ENCODE measurements at regions of chr22 and their contacts with region 1.

Region 1: GRCh38 chr22:39559454-39560105 is 11.0 kb upstream of the CACNA1I start:
- DNase-seq: peak; percentile 47

Region 2: GRCh38 chr22:40024201-40025061 is 464.9 kb after region 1 on chr22:
- in situ Hi-C with region 1: loop called (anchors 25 kb)
- DNase-seq: peak; percentile 82